ENCODE measurements at regions of chr16 and their contacts with region 1.

Region 1: GRCh38 chr16:15704545-15704987 is 54.5 kb downstream of the NDE1 start:
- DNase-seq: no peak

Region 2: DNA sequence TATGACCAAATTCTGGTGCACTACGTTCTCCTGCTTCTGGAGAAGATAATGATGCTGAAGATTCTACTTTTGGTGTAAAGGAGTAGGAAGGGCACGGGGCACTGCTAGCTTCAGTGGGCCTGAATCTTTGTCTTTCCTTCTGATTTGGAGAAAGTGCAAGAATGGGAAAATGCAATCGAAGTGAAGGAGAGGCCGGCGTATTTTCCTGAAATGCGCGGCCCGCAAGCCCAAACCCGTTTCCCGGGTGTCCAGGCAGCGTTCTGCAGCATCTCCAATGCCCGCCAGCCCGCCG is 54.9 kb before region 1 on chr16:
- intact Hi-C with region 1: loop called (anchors 5 kb)
- DNase-seq: no peak

Region 3: DNA sequence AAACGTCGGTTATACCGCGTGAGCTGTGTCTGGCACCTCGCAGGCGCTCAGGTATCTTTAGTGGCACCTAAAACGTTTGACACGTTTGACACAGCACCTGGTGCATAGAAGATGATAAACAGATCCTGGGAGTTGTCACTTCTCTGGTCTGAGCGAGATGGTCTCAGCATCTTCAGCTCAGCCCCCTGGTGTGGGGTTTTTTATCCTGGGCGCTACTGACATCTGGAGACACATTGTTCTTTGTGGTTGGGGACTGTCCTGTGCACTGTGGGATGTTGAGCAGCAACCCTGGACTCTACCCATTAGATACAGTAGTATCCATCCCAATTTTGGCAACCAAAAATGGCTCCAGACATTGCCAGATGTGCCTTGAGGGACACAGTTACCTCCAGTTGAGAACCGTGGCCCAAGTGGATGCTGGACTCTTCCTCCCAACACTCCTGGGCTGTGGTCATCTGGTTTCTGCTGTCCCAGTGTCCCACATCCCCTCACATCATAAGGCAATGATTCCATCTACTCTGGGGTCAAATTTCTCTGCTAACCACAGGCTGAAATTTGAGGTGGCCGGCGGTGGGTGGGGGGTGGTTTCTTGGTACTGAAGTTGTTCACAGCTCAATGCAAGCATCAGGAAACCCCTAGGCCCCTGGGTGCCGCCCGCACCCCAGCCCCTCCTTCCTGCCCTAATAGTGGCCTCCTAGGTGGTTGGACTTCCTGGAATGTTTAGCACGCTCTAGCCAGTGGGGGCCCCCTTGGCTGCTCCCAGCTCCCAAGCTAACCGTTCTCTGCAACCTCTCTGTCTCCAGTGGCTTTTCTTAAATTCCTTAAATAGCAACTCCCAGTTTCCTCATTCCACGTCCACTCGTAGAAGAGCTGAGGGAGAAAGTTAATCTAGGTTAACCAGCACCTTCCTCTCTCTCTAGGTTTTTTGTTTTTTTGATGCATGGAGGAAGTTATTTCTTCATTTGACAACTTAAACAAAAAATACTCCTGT is 369.6 kb after region 1 on chr16:
- intact Hi-C with region 1: no loop called
- DNase-seq: no peak

Measured in cardiac septum (tissue), 1 donor.